HepG2 (cell line): ENCODE measurements at regions of chr3 and their contacts with region 1.

Region 1: DNA sequence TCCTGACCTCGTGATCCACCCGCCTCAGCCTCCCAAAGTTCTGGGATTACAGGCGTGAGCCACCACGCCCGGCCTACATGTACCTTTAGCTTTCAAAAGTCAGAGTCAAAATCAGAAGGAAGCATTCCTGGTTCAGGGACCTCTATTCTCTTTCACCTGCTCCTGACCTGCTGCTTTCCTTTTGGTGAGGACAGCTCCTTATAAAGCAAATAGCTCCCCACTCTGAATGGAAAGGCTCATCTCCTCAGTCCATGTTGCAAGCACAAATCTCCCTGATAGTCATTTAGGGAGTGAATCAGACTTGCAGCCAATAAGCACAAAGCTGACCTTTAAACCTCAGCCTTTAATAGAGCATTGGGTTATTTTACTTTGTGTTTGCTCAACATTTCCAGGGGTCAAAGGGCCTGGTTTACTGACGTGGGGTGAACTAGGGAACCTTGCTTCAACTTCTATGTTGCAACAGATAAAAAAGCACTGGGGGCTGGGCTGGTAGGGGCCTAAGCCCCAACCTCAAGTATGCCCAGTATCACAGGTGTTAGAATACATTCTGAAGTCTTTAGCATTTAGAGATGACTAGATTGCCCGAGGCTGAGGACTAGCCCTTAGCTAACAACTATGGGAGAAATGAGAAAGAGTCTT is 43.1 kb downstream of the THRB start:
- DNase-seq: peak; percentile 99
- ATAC-seq: peak; percentile 95
- H3K4me3 ChIP-seq: peak overlapping the region; percentile 35 to 68 (median 56); a peak in 5 of 6 replicates
- H3K27ac ChIP-seq: peak overlapping the region; percentile 99
- H3K4me1 ChIP-seq: peaks cover 57% of the 10 kb centered on the region
- H3K27me3 ChIP-seq: no peaks in the 10 kb centered on the region
- CTCF ChIP-seq: peak; percentile 34; the same call in 1 of the 2 replicates
- EP300 ChIP-seq: peak; percentile 97 to 99
- POLR2A ChIP-seq: peak; percentile 63 to 96
- RAD21 ChIP-seq: no peak; the same call in 1 of the 2 replicates

Region 2: DNA sequence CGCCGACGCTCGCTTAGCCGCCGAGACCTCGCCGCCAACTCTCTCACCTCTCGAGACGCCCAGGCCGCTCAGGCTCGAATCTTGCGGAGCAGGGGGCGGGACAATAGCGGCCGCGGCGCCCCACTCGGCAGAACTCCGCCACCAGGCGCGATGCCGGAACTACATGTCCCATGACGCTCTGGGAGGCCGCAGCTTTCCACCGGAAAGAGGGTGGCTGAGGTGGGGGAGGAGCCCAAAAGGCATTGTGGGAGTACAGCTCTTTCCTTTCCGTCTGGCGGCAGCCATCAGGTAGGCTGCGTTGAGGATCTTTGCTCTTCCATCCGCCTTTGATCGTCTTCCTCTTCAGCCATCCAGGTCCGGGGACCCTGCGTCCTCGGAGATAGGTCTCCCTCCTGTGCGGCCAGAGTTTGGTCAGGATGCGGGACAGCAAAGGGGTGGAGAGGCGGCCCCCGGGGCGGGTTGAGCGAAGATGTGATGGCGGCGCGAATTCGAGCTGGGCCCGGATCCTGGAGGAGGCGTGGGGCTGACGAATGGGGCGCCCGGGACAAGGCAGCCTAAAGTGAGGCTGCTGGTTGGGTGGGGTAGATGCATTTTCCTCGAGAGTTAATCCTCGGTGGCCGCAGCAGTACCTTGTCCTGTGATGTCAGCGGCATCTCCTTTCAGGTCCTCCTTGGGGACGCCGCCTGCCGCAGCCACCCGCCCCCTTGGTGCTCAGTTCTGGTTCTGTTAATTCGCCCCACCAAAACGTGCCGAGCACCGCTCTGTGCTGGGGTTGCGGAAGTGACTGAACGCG is 534.5 kb before region 1 on chr3 and contains the starts of genes NKIRAS1 and RPL15:
- CTCF ChIA-PET with region 1: no interaction called
- POLR2A ChIA-PET with region 1: interaction called, 10 read pairs
- in situ Hi-C with region 1: no loop called
- intact Hi-C with region 1: no loop called
- DNase-seq: peak; percentile 94
- ATAC-seq: peak; percentile 94
- H3K4me3 ChIP-seq: peak within 1 kb of the TSS; percentile 95 to 99 (median 98)
- H3K27ac ChIP-seq: peak within 1 kb of the TSS; percentile 81
- H3K4me1 ChIP-seq: peaks cover 54% of the 10 kb centered on the region
- H3K27me3 ChIP-seq: no peaks in the 10 kb centered on the region; a peak in 1 of 5 replicates
- CTCF ChIP-seq: peak; percentile 51
- EP300 ChIP-seq: 0 out of 4 replicates have a peak, but pooled peaks of 1 of the 2 experiments have one; percentile 36
- POLR2A ChIP-seq: peak; percentile 100
- RAD21 ChIP-seq: no peak; the same call in 1 of the 2 replicates
- total RNA-seq, gene NKIRAS1: 8.0 and 10.5 TPM in 2 replicates
- total RNA-seq, gene RPL15: 1,297 and 1,763 TPM in 2 replicates

Region 3: GRCh38 chr3:23968463-23969184 is 483.0 kb before region 1 on chr3:
- CTCF ChIA-PET with region 1: no interaction called
- POLR2A ChIA-PET with region 1: no interaction called
- in situ Hi-C with region 1: no loop called
- intact Hi-C with region 1: no loop called
- DNase-seq: no peak
- ATAC-seq: no peak
- H3K4me3 ChIP-seq: no peak overlapping the region
- H3K27ac ChIP-seq: no peak overlapping the region
- H3K4me1 ChIP-seq: no peaks in the 10 kb centered on the region
- H3K27me3 ChIP-seq: no peaks in the 10 kb centered on the region
- CTCF ChIP-seq: no peak
- EP300 ChIP-seq: no peak
- POLR2A ChIP-seq: no peak
- RAD21 ChIP-seq: no peak

Region 4: GRCh38 chr3:24272875-24273274 is 178.7 kb before region 1 on chr3:
- CTCF ChIA-PET with region 1: no interaction called
- POLR2A ChIA-PET with region 1: interaction called, 10 read pairs
- in situ Hi-C with region 1: no loop called
- intact Hi-C with region 1: no loop called
- DNase-seq: peak; percentile 31
- ATAC-seq: no peak; the same call in 2 of the 3 replicates
- H3K4me3 ChIP-seq: no peak overlapping the region
- H3K27ac ChIP-seq: peak overlapping the region; percentile 36
- H3K4me1 ChIP-seq: peaks cover 26% of the 10 kb centered on the region
- H3K27me3 ChIP-seq: no peaks in the 10 kb centered on the region
- CTCF ChIP-seq: no peak
- EP300 ChIP-seq: peak in 1 of 2 experiments; percentile 42; a peak in 1 of 4 replicates
- POLR2A ChIP-seq: no peak
- RAD21 ChIP-seq: no peak

Region 5: DNA sequence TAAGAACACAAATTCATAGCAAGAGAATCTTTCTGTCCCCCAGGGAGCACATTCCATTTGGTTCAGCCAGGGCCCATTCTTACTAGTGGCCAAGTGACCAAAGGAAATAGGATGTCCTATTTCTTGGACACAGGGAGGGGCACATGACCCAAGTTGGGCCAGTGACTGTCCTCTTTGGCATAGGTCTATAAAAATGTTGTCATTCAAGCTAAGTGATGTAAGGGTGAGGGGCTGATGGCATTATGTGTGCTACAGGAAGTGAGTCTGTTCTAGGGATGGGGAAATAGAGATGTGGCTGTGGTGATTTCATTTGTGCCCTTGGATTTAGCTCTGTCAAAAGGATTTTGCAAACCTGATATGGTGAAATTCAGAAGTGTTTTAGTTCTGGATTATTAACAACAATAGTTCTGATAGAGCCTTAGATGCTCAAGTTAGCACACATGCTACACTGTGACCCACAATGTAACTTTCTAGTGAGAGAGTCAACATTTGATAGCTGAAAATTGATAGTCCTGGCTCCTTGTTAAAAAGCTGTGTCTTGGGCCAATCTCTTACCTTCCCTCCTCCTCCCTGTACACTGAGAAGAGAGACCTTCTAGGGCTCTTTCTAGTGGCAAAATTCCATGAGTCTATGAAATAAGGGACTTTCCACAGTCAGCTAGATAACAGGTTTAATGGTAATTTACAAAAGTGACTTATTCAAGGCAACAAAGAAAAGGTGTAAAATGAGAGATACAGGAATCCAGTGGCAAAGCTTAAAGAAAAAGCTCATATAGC is 74.2 kb before region 1 on chr3:
- CTCF ChIA-PET with region 1: no interaction called
- POLR2A ChIA-PET with region 1: interaction called, 20 read pairs
- in situ Hi-C with region 1: no loop called
- intact Hi-C with region 1: no loop called
- DNase-seq: no peak
- ATAC-seq: no peak
- H3K4me3 ChIP-seq: no peak overlapping the region
- H3K27ac ChIP-seq: no peak overlapping the region
- H3K4me1 ChIP-seq: peaks cover 55% of the 10 kb centered on the region
- H3K27me3 ChIP-seq: no peaks in the 10 kb centered on the region
- CTCF ChIP-seq: no peak
- EP300 ChIP-seq: no peak
- POLR2A ChIP-seq: no peak
- RAD21 ChIP-seq: no peak

Region 6: DNA sequence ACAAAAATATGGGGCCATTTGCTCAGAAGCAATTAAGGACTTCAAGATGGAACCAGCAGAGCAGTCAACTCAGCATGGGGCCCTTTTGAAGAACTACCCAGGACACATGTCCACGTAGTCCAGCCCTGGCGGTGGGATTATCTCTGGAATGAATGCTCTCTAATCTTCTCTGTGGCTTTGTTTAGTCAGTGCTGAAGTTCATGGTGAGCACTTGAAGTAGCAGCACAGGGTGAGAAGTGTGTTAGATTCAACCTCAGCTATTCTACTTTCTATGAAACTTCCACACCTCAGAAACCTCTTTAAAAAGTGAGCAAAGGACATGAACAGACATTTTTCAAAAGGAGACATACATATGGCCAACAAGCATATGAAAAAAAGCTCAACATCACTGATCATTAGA is 31.4 kb before region 1 on chr3:
- CTCF ChIA-PET with region 1: no interaction called
- POLR2A ChIA-PET with region 1: interaction called, 10 read pairs
- in situ Hi-C with region 1: no loop called
- intact Hi-C with region 1: no loop called
- DNase-seq: peak; percentile 21
- ATAC-seq: peak; percentile 68
- H3K4me3 ChIP-seq: no peak overlapping the region
- H3K27ac ChIP-seq: no peak overlapping the region
- H3K4me1 ChIP-seq: peaks cover 32% of the 10 kb centered on the region
- H3K27me3 ChIP-seq: no peaks in the 10 kb centered on the region
- CTCF ChIP-seq: no peak
- EP300 ChIP-seq: no peak
- POLR2A ChIP-seq: no peak
- RAD21 ChIP-seq: no peak

Region 7: DNA sequence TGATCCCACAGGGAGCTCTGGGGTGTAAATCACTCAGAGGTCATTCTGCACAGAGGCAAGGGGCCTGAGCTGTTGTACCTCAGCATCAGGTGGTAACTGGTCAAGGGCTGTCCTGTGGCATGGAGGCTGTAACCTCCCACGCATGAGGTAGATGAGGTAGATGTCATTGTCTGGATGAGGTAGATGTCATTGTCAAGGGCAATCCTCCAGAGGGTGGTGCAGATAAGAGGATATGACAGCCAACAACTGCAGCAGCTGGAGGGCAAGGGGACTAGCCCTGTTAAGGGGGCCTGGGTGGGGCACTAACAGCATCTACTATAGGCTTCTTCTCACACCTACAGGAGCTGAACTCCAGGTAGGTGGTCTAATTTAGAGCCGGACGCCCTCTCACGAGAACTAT is 12.6 kb before region 1 on chr3:
- CTCF ChIA-PET with region 1: no interaction called
- POLR2A ChIA-PET with region 1: interaction called, 19 read pairs
- in situ Hi-C with region 1: no loop called
- intact Hi-C with region 1: no loop called
- DNase-seq: no peak
- ATAC-seq: no peak
- H3K4me3 ChIP-seq: no peak overlapping the region
- H3K27ac ChIP-seq: no peak overlapping the region
- H3K4me1 ChIP-seq: peaks cover 66% of the 10 kb centered on the region
- H3K27me3 ChIP-seq: no peaks in the 10 kb centered on the region
- CTCF ChIP-seq: no peak
- EP300 ChIP-seq: no peak
- POLR2A ChIP-seq: no peak
- RAD21 ChIP-seq: no peak

Region 8: DNA sequence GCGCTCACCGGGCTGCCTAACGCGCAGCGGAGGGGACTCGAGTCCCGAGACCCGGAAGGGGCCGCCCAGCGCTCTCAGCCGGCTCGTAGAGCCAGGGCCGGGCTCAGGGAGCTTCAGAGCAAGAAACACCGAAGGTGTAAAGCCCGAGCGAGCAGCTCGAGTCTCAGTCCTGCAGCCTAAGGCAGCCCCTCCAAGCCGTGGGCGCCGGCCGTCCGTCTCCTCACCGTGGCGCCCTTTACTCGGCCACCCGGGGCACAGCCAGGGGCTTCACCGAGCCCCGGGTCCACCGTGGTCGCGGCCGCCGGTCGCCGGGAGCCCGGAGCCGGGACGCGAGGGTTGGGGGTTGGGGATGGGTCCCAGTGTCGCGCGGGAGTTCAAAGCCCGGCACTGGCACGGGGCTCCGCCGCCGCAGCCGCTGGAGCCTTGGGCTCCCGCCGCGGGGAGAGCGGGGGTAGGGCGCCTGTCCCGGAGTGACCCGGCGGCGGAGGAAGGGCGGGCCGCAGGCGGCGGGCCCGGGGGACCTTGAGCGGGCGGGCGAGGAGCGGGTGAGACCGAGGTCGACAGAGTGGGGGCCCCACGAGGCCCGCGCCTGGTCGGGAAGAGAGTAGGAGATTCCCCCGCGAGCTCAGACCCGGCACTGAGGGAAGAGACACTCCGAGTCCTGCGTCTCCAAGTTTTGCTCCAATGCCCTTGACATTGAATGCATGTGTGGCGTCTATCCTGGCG is 70.0 kb after region 1 on chr3:
- CTCF ChIA-PET with region 1: no interaction called
- POLR2A ChIA-PET with region 1: interaction called, 15 read pairs
- in situ Hi-C with region 1: no loop called
- intact Hi-C with region 1: loop called (anchors 2 kb)
- DNase-seq: peak; percentile 36
- ATAC-seq: peak; percentile 72
- H3K4me3 ChIP-seq: peak overlapping the region; percentile 82 to 93 (median 85)
- H3K27ac ChIP-seq: peak overlapping the region; percentile 92
- H3K4me1 ChIP-seq: peaks cover 65% of the 10 kb centered on the region
- H3K27me3 ChIP-seq: no peaks in the 10 kb centered on the region; a peak in 1 of 5 replicates
- CTCF ChIP-seq: peak; percentile 34
- EP300 ChIP-seq: no peak
- POLR2A ChIP-seq: peak in 1 of 2 experiments; percentile 30
- RAD21 ChIP-seq: peak; percentile 62

Region 9: GRCh38 chr3:24548278-24548677 is 96.7 kb after region 1 on chr3:
- CTCF ChIA-PET with region 1: no interaction called
- POLR2A ChIA-PET with region 1: no interaction called
- in situ Hi-C with region 1: no loop called
- intact Hi-C with region 1: no loop called
- DNase-seq: no peak
- ATAC-seq: no peak
- H3K4me3 ChIP-seq: no peak overlapping the region
- H3K27ac ChIP-seq: no peak overlapping the region
- H3K4me1 ChIP-seq: peaks cover 23% of the 10 kb centered on the region
- H3K27me3 ChIP-seq: no peaks in the 10 kb centered on the region
- CTCF ChIP-seq: no peak
- EP300 ChIP-seq: no peak
- POLR2A ChIP-seq: no peak
- RAD21 ChIP-seq: no peak

Region 10: GRCh38 chr3:24562895-24563294 is 111.3 kb after region 1 on chr3:
- CTCF ChIA-PET with region 1: no interaction called
- POLR2A ChIA-PET with region 1: no interaction called
- in situ Hi-C with region 1: no loop called
- intact Hi-C with region 1: no loop called
- DNase-seq: no peak
- ATAC-seq: no peak
- H3K4me3 ChIP-seq: no peak overlapping the region
- H3K27ac ChIP-seq: no peak overlapping the region
- H3K4me1 ChIP-seq: no peaks in the 10 kb centered on the region
- H3K27me3 ChIP-seq: no peaks in the 10 kb centered on the region; a peak in 2 of 5 replicates
- CTCF ChIP-seq: no peak
- EP300 ChIP-seq: no peak
- POLR2A ChIP-seq: no peak
- RAD21 ChIP-seq: no peak

Region 11: DNA sequence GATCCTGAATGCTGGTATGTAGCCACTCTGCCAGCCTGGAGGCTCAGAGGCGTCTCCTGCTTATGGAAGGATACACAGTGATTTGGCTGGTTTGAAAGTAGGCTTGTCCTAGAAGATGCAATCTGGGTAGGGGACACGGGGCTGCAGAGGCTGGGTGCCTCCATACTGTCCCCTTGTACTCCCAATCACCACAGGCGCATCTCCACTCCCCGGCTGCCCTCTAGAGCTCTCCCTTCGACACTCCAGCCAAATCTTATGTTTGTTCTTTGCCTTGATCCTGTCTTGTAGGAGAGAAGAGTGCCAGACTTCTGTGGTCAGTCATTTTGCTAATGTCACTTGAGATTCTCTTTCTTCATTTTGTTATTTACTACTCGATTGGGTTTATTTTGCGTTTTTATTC is 211.8 kb after region 1 on chr3:
- CTCF ChIA-PET with region 1: no interaction called
- POLR2A ChIA-PET with region 1: no interaction called
- in situ Hi-C with region 1: no loop called
- intact Hi-C with region 1: no loop called
- DNase-seq: no peak
- ATAC-seq: peak; percentile 60
- H3K4me3 ChIP-seq: no peak overlapping the region
- H3K27ac ChIP-seq: no peak overlapping the region
- H3K4me1 ChIP-seq: no peaks in the 10 kb centered on the region
- H3K27me3 ChIP-seq: no peaks in the 10 kb centered on the region; a peak in 1 of 5 replicates
- CTCF ChIP-seq: no peak
- EP300 ChIP-seq: no peak
- POLR2A ChIP-seq: no peak
- RAD21 ChIP-seq: no peak